ENCODE measurements at regions of chr10 and their contacts with region 1.

Region 1: GRCh38 chr10:110354322-110354766 is 49.6 kb upstream of the SMNDC1 start:
- DNase-seq: peak; percentile 93
- ATAC-seq: peak; percentile 50
- H3K4me3 Mint-ChIP-seq: peak overlapping the region; percentile 57
- H3K27ac Mint-ChIP-seq: peak overlapping the region; percentile 99
- H3K4me1 Mint-ChIP-seq: peaks cover 62% of the 10 kb centered on the region
- H3K27me3 Mint-ChIP-seq: no peaks in the 10 kb centered on the region

Region 2: DNA sequence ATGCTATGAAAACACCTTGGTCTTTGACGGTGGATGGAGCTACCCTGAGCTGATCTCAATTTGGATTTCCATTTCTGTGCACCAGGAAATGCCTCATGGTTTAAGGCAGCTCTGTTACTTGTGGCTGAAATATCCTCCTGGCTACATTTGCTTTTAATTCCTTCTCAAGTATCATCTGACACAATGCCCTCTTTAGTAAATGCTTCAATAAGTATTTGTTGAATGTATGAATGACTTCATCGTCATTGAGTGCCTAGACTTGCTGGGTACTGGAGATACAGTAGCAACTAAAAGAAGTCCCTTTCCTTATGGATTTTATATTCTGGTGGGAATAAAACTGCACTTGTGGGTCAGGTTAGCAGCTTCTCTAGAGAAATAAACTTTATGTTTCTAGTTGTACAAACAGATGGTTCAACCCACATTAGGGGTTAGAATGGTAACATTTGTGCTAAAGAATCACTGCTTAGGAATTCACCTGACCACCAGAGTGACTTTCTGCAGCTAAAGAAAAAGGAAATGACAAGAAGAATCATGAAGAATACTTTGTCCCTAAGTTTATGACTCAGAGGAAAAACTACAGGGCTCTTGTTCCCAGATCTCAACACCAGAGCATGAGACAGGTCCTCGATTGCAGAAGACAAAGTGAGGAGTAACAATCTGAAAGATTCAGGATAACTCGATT is 27.9 kb before region 1 on chr10:
- CTCF ChIA-PET with region 1: interaction called, 35 read pairs
- DNase-seq: no peak
- ATAC-seq: no peak
- H3K4me3 Mint-ChIP-seq: no peak overlapping the region
- H3K27ac Mint-ChIP-seq: no peak overlapping the region
- H3K4me1 Mint-ChIP-seq: peaks cover 44% of the 10 kb centered on the region
- H3K27me3 Mint-ChIP-seq: no peaks in the 10 kb centered on the region

Region 3: DNA sequence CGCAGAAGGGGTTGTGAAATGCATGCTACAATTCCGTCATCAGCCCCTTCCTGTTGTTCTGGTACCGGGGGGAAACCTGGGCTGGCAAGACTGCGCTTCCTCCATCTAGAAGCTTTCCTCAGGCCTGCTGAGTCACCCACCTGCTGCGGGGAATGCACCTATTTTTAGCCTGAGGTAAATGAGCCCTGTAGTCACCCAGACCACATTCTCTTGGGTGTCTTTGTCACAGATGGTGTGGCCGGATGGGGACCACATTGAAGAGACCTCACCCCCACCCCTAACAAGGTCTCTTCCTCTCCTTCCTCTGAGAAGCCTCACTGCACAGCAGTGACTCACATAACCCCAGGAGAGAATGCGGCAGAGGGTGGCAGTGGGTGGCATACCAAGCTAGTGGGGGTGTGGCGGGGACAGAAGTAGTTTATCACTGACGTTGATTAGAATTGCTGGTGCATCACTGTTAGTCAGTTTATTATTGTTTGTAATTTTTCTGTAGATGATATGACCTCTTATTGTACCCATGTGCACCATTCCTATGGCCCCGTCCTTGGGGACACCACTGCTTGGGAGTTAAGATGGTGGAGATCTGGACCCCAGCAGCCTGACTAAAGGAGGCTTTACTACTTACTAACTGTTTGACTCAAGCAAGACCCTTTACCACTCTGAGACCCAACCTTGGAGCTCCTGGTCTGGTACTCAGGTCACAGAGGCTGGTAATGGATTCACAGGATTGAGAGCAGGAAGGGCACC is 60.4 kb after region 1 on chr10:
- CTCF ChIA-PET with region 1: interaction called, 55 read pairs
- DNase-seq: peak; percentile 98
- ATAC-seq: peak; percentile 93
- H3K4me3 Mint-ChIP-seq: peak overlapping the region; percentile 7
- H3K27ac Mint-ChIP-seq: peak overlapping the region; percentile 85
- H3K4me1 Mint-ChIP-seq: peaks cover 77% of the 10 kb centered on the region
- H3K27me3 Mint-ChIP-seq: no peaks in the 10 kb centered on the region

Region 4: DNA sequence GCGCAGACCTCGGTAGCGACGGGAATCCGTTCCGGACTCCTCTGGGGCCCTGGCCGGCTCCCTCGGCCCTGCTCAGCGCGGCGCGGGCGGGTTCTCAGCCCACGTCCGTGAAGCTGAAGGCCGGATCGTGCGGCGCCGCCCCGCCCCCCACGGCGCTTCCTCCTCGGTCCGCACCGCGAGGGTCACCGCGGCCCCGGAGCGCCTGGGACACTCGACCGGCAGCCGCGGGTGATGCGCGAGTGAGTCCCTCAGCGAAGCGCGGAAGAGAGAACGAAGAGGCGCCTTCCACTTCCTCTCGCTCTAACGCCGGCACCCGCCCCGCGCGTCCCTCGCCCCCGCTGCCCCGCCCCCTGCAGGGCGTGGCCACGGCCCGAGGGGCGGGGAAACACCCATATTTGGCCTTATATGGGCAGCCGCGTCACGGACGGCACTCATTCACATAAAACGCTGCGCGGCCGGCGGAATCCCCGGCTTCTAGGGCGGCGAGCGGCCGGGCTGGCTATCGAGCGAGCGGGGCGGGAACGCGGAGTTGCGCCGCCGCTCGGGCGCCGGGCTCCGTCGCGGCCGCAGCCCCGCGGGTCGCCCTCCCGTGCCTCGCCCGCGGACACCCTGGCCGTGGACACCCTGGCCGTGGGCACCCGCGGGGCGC is 143.2 kb after region 1 on chr10 and contains the start of gene DUSP5:
- CTCF ChIA-PET with region 1: interaction called, 178 read pairs
- DNase-seq: peak; percentile 96
- ATAC-seq: peak; percentile 67
- H3K4me3 Mint-ChIP-seq: peak within 1 kb of the TSS; percentile 99
- H3K27ac Mint-ChIP-seq: peak within 1 kb of the TSS; percentile 97
- H3K4me1 Mint-ChIP-seq: peaks cover 52% of the 10 kb centered on the region
- H3K27me3 Mint-ChIP-seq: no peaks in the 10 kb centered on the region
- total RNA-seq, gene DUSP5: 102 to 223 TPM

Region 5: DNA sequence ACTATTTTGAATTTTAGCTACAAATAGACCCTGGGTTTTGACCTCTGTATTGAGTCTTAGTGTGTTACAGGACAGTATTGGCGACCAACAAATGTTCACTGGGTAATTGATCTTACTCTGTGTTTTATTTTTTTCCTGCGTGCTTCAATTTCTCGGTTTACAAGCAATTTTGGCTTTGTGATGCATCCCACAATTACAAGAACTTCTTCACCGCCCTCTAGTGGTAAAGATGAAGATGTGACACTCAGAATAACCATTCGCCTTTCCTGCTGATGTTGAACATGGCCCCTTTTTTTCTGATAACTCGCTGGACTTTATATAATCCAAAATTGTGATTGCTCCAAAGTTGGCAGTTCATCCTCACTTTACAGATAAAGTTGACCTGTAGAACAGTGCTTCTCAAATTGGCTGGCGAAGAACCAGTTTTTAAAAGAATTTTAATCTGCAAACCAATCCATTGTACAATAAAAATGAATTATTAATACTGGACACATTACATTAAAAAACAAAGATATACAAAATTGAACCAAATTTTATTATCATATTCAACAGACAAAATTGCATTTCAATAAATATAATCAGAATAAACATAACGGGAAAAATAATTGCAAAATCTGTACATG is 192.9 kb after region 1 on chr10:
- CTCF ChIA-PET with region 1: interaction called, 50 read pairs
- DNase-seq: no peak
- ATAC-seq: peak; percentile 84
- H3K4me3 Mint-ChIP-seq: no peak overlapping the region
- H3K27ac Mint-ChIP-seq: no peak overlapping the region
- H3K4me1 Mint-ChIP-seq: peaks cover 11% of the 10 kb centered on the region
- H3K27me3 Mint-ChIP-seq: peaks cover 32% of the 10 kb centered on the region

Measured in activated CD8-positive, alpha-beta memory T cell treated with anti-CD3 and anti-CD28 coated beads, Interleukin-2, amount 10 ng/mL, durations not matched to agents 7 days and 5 days (primary cell).